Mucosa of descending colon (tissue), 3 donors: ENCODE measurements at regions of chr4 and their contacts with region 1.

Region 1: GRCh38 chr4:118974758-118975157 is 86.1 kb downstream of the SYNPO2 start:
- DNase-seq: no peak
- ATAC-seq: no peak
- H3K4me3 ChIP-seq: no peak overlapping the region
- H3K4me1 ChIP-seq: no peaks in the 10 kb centered on the region
- CTCF ChIP-seq: no peak

Region 2: GRCh38 chr4:118740869-118741268 is 233.9 kb before region 1 on chr4:
- intact Hi-C with region 1: loop called in 1 of 2 experiments (anchors 10 kb)
- DNase-seq: no peak
- ATAC-seq: no peak
- H3K4me3 ChIP-seq: no peak overlapping the region
- H3K4me1 ChIP-seq: no peaks in the 10 kb centered on the region
- CTCF ChIP-seq: no peak

Region 3: DNA sequence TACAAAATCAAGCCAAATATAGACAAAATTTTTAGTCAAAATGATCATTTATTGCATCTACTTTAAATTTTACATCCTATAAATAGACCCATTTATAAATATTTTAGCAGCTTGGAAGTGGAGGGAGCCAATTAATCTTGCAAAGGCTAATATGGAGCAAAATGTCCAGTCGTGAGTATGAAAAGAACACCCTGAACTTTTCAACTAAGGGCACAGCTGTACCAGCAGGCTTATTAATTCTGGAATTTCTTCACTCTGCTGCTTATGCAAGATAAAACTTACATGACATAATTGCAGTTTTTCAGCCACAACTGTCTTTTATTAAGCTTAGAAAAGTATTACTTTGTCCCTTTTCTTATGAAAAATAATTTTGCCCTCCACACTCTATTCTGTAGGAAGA is 214.9 kb after region 1 on chr4:
- intact Hi-C with region 1: no loop called
- DNase-seq: no peak
- ATAC-seq: peak; percentile 20
- H3K4me3 ChIP-seq: no peak overlapping the region
- H3K4me1 ChIP-seq: peaks cover 3% of the 10 kb centered on the region
- CTCF ChIP-seq: no peak